CD8-positive, alpha-beta memory T cell (primary cell): ENCODE measurements at regions of chr9 and their contacts with region 1.

Region 1: DNA sequence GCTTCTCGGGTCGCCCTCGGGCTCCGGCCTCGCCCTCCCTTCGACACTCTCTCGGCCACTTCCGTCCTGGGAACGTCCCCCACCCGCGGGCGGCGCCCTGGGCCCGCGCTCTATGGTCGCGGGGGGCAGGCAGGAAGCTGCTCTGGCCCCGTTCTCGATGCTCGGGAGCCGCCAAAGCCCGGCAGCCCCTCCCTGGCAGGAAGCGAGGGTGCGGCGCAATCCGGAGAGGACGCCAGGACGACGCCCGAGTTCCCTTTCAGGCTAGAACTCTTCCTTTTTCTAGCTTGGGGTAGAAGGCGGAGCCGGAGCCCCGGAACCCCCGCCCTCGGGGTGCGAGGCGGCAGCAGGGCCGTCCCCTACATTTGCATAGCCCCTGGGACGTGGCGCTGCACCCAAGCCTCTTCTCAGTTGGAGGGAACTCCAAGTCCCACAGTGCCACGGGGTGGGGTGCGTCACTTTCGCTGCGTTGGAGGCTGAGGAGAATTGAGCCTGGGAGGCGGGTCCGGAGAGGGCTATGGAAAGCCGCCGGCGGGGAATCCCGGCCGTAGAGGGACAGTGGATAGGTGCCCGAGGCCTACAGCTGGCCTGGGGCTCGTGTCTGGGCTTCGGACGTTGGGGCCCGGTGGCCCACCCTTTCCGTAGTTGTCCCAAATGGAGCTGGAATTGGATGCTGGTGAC is at the starts of genes CREB3 and TLN1:
- DNase-seq: peak; percentile 91 to 98 (median 97)
- H3K4me3 ChIP-seq: peak within 1 kb of the TSS; percentile 97
- H3K4me3 Mint-ChIP-seq: peak within 1 kb of the TSS in 4 of 7 donors; percentile 87 to 96 (median 94)
- H3K27ac ChIP-seq: peak within 1 kb of the TSS; percentile 92
- H3K27ac Mint-ChIP-seq: peak within 1 kb of the TSS in 7 of 8 donors; percentile 92 to 98 (median 95)
- H3K4me1 ChIP-seq: peaks cover 63% of the 10 kb centered on the region
- H3K4me1 Mint-ChIP-seq: peaks cover 20 to 27% (median 22%) of the 10 kb centered on the region in 3 donors
- H3K27me3 ChIP-seq: no peaks in the 10 kb centered on the region
- H3K27me3 Mint-ChIP-seq: no peaks in the 10 kb centered on the region
- total RNA-seq, gene CREB3: 38.0 to 38.6 TPM
- total RNA-seq, gene TLN1: 248 to 249 TPM

Region 2: DNA sequence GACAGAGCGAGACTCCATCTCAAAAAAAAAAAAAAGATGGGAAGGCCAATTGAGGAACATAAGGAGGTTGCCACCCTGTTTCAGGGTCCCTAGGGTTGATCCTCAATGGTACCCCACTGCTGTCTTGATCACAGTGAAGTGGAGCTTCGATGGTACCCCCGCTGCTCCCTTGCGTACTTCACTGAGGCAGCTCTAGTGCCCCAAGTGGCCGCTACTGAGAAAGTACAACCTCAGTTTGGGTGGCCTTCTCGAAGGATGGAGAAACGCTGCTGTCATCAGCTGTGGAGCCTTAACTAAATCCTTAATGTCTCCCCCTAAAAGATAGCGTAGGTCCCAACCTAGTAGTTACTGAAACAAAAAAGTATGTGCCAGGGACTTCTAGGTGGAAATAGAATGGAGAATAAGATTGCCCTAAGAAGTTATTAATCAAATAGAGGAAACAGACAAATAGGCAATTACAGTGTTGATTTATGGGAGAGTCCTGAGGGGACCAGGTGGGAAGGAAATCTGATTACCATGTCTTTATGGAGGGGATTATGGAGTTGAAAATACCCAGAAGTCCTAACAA is 120.9 kb before region 1 on chr9:
- CTCF ChIA-PET with region 1: interaction called, 25 read pairs
- POLR2A ChIA-PET with region 1: interaction called, 19 read pairs
- DNase-seq: peak; percentile 37 to 68 (median 44)
- H3K4me3 ChIP-seq: no peak overlapping the region
- H3K4me3 Mint-ChIP-seq: peak overlapping the region in 2 of 7 donors; percentile 61 to 67
- H3K27ac ChIP-seq: no peak overlapping the region
- H3K27ac Mint-ChIP-seq: peak overlapping the region; percentile 3 to 84 (median 66)
- H3K4me1 ChIP-seq: peaks cover 11% of the 10 kb centered on the region
- H3K4me1 Mint-ChIP-seq: peaks cover 21 to 26% (median 26%) of the 10 kb centered on the region in 3 donors
- H3K27me3 ChIP-seq: no peaks in the 10 kb centered on the region
- H3K27me3 Mint-ChIP-seq: peaks cover 0 to 1% of the 10 kb centered on the region in 2 donors

Region 3: DNA sequence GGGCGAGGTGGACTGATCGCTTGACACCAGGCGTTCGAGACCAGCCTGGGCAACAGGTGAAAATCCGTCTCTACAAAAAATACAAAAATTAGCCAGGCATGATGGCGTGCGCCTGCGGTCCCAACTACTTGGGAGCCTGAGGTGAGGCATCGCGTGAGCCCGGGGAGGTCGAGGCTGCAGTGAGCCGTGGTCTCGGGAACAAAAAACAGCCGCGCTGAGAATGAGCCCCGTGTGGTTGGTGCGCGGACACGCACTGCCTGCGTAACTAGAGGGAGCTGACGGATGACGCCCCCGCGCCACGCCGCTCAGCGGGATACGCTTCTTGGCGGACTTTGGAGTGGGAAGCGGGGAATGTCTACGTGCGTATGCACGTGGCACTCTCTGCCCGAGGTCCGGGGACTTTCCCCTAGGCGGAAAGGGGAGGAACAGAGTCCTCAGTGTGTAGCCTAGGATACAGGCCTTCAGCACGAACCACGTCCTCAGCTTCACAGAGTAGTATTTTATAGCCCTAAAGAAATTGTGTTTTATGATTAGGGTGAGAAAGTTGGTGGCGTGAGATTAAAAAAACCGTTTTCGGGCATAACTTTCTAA is 74.6 kb before region 1 on chr9 and contains the start of gene RMRP:
- CTCF ChIA-PET with region 1: interaction called, 89 read pairs
- POLR2A ChIA-PET with region 1: interaction called, 19 read pairs
- DNase-seq: peak; percentile 76 to 94 (median 91)
- H3K4me3 ChIP-seq: peak within 1 kb of the TSS; percentile 90
- H3K4me3 Mint-ChIP-seq: peak within 1 kb of the TSS; percentile 84 to 97 (median 92)
- H3K27ac ChIP-seq: peak within 1 kb of the TSS; percentile 99
- H3K27ac Mint-ChIP-seq: peak within 1 kb of the TSS; percentile 97 to 100 (median 99)
- H3K4me1 ChIP-seq: peaks cover 60% of the 10 kb centered on the region
- H3K4me1 Mint-ChIP-seq: peaks cover 61 to 79% (median 72%) of the 10 kb centered on the region in 3 donors
- H3K27me3 ChIP-seq: no peaks in the 10 kb centered on the region
- H3K27me3 Mint-ChIP-seq: peaks cover 4 to 9% of the 10 kb centered on the region in 2 donors
- total RNA-seq, gene RMRP: 7,718 to 11,549 TPM

Region 4: GRCh38 chr9:35748858-35749514 is 16.7 kb after region 1 on chr9 and contains the starts of genes GBA2 and RGP1:
- CTCF ChIA-PET with region 1: interaction called, 68 read pairs
- POLR2A ChIA-PET with region 1: interaction called, 45 read pairs
- DNase-seq: peak; percentile 59 to 79 (median 66)
- H3K4me3 ChIP-seq: peak within 1 kb of the TSS; percentile 88
- H3K4me3 Mint-ChIP-seq: peak within 1 kb of the TSS; percentile 91 to 98 (median 96)
- H3K27ac ChIP-seq: peak within 1 kb of the TSS; percentile 75
- H3K27ac Mint-ChIP-seq: peak within 1 kb of the TSS; percentile 83 to 98 (median 93)
- H3K4me1 ChIP-seq: peaks cover 38% of the 10 kb centered on the region
- H3K4me1 Mint-ChIP-seq: peaks cover 36 to 67% (median 44%) of the 10 kb centered on the region in 3 donors
- H3K27me3 ChIP-seq: no peaks in the 10 kb centered on the region
- H3K27me3 Mint-ChIP-seq: no peaks in the 10 kb centered on the region
- total RNA-seq, gene GBA2: 41.8 to 42.0 TPM
- total RNA-seq, gene RGP1: 19.9 to 21.9 TPM

Region 5: GRCh38 chr9:35814841-35815543 is 82.7 kb after region 1 on chr9 and contains the start of gene HINT2:
- CTCF ChIA-PET with region 1: interaction called, 16 read pairs
- POLR2A ChIA-PET with region 1: interaction called, 8 read pairs
- DNase-seq: peak; percentile 96 to 99 (median 96)
- H3K4me3 ChIP-seq: peak within 1 kb of the TSS; percentile 91
- H3K4me3 Mint-ChIP-seq: peak within 1 kb of the TSS; percentile 91 to 98 (median 96)
- H3K27ac ChIP-seq: peak within 1 kb of the TSS; percentile 65
- H3K27ac Mint-ChIP-seq: peak within 1 kb of the TSS; percentile 91 to 97 (median 96)
- H3K4me1 ChIP-seq: peaks cover 29% of the 10 kb centered on the region
- H3K4me1 Mint-ChIP-seq: peaks cover 36 to 49% (median 43%) of the 10 kb centered on the region in 3 donors
- H3K27me3 ChIP-seq: no peaks in the 10 kb centered on the region
- H3K27me3 Mint-ChIP-seq: peaks cover 0 to 12% of the 10 kb centered on the region in 2 donors
- total RNA-seq, gene HINT2: 65.1 to 71.7 TPM

Region 6: DNA sequence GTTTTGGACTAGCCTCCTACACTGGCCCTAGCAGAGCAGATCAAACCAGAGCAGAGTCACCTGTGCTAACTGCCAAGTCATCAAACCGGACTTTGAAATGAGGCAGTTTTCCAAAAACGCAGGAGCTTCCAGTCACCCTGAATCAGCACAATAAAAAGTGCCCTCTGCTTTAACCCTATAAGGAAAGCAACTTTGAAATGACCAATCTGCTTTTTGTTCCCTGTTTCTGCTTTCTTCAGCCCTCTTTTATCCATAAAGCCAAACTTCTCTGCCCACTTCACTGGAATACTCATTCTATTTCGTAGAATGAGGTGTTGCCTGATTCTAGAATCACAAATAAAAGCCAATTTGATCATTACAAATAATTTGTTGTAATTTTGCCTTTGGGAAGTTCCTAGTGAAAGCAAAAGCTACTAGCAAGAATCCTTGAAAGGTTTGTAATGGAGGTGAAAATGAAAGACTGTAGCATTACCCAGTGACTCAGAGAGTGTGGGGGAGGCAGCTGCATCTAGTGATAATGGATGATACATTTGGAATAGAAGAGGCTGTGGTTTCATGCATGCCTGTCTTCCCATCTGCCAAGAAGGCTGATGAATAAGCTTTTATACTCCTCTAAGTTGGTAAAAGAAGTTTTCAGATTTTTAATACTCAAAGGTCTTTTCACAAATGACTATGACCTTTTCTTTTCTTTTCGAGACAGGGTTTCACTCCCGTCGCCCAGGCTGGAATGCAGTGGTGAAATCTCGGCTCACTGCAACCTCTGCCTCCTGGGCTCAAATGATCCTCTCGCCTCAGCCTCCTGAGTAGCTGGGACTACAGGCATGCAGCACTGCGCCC is 191.9 kb after region 1 on chr9:
- CTCF ChIA-PET with region 1: no interaction called
- POLR2A ChIA-PET with region 1: no interaction called
- DNase-seq: no peak
- H3K4me3 ChIP-seq: no peak overlapping the region
- H3K4me3 Mint-ChIP-seq: no peak overlapping the region
- H3K27ac ChIP-seq: peak overlapping the region; percentile 74
- H3K27ac Mint-ChIP-seq: no peak overlapping the region
- H3K4me1 ChIP-seq: no peaks in the 10 kb centered on the region
- H3K4me1 Mint-ChIP-seq: no peaks in the 10 kb centered on the region
- H3K27me3 ChIP-seq: no peaks in the 10 kb centered on the region
- H3K27me3 Mint-ChIP-seq: peaks cover 2 to 8% of the 10 kb centered on the region in 2 donors